ENCODE measurements at regions of chr3 and their contacts with region 1.

Region 1: GRCh38 chr3:24264748-24265158 is 229.9 kb downstream of the THRB start:
- ATAC-seq: peak in 3 of 8 experiments; percentile 20 to 42 (median 25)
- H3K4me3 ChIP-seq: no peak overlapping the region
- H3K27ac ChIP-seq: no peak overlapping the region
- H3K4me1 ChIP-seq: peaks cover 0 to 1% of the 10 kb centered on the region in 2 donors

Region 2: DNA sequence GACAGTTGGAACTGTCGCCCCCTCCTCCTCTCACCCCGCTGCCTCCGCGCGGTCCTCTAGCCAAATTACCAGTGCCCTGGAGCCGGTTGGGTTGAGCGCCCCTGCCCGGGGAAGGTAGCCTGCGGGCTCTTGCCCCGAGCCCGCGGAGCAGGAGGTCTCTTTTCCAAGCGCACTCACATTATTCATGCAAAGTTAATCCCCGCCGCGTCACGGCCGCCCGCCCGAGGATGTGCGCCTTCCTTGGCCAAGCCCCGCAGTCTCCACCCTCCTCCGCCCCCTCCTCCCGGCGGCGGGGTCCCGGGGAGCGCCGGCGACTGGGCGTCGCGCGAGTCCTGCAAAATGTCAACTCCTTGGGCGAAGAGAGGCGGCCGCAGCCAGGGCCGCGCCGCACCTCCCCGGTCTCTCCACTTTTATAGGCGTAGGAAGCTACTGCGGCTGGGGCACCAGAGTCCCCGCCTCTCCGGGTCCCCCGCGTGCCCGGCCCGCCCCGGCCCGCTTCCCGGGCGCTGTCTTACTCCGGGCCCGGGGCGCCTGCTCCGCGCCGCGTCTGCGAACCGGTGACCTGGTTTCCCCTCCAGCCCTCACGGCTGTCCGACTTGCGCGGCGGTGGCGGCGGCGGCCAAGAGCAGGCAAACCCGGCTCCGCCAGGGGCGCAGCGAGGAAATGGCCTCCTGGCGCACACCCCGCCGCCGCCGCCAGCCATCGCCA is 230.0 kb after region 1 on chr3 and contains the start of gene THRB:
- in situ Hi-C with region 1: loop called in 2 of 9 experiments (anchors 25 kb)
- ATAC-seq: peak; percentile 65 to 86 (median 81)
- H3K4me3 ChIP-seq: peak within 1 kb of the TSS; percentile 57 to 81 (median 66)
- H3K27ac ChIP-seq: no peak within 1 kb of the TSS
- H3K4me1 ChIP-seq: peaks cover 0 to 16% of the 10 kb centered on the region in 2 donors
- total RNA-seq, gene THRB: 0.42 to 26.4 (median 3.3) TPM

Region 3: DNA sequence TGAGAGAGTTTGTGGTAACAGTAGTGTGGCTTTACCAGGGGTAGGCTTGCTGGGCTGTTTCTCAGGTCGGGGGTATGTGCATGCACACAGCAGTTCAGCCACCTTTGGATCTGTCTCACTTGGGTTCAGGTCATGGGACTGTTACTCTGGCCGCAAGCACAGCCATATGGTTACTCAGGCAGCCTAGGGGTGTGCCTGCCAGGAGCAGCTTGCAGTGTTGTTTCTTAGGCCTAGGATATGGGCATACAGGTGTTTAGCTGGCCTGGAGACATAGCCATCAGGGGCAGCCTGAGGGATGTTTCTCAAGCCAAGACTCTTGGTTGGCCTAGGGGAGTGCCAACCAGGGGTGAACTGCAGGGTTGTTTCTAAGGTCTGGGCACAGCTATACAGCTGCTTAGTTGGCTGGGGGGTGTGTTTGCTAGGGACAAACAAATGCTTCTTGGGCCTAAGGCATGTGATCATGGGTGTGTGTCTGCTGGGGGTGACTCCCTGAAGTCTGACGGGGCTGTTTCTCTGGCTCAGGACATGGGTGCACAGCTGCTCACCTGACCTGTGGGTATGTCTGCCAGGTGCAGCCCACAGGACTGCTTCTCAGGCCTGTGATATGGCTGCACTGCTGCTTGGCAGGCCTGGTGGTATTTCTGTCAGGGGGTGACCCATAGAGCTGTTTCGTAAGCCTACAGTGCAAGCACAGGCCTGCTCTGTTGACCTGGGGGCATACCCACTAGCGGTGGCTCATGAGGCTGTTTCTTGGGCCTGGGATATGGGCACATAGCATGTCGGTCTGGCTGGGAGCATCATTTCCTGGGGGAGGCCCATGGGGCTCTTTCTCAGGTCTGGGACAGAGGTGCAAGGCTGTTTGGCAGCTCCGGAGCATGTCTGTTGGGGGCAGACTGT is 397.9 kb after region 1 on chr3:
- in situ Hi-C with region 1: loop called in 1 of 9 experiments (anchors 25 kb)
- ATAC-seq: no peak
- H3K4me3 ChIP-seq: no peak overlapping the region
- H3K27ac ChIP-seq: no peak overlapping the region
- H3K4me1 ChIP-seq: peaks cover 0 to 6% of the 10 kb centered on the region in 2 donors